Activated CD4-positive, alpha-beta memory T cell treated with anti-CD3 and anti-CD28 coated beads for 36 hours (primary cell): ENCODE measurements at regions of chr18 and their contacts with region 1.

Region 1: DNA sequence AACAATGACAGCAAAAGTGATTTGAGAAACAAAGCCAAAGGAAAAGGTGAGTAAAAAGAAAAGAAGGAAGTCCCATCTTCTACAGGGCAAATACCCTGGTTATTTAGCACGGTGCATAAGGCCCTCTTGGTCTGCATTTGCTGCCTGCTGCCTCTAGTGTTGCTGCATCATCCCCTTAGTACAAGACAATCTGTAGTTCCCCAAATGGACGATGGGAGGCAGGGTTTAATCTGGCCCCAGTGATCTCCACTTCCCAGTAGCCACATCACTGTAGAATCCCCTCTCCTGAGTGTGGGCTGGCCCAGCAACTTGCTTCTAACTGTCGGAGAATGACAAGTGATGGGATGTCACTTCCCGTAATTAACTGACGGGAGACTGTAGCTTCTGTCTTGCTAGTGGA is 85.1 kb downstream of the CTAGE1 start:
- DNase-seq: no peak
- H3K4me3 Mint-ChIP-seq: no peak overlapping the region
- H3K27ac Mint-ChIP-seq: no peak overlapping the region
- H3K4me1 Mint-ChIP-seq: peaks cover 5% of the 10 kb centered on the region
- H3K27me3 Mint-ChIP-seq: no peaks in the 10 kb centered on the region

Region 2: DNA sequence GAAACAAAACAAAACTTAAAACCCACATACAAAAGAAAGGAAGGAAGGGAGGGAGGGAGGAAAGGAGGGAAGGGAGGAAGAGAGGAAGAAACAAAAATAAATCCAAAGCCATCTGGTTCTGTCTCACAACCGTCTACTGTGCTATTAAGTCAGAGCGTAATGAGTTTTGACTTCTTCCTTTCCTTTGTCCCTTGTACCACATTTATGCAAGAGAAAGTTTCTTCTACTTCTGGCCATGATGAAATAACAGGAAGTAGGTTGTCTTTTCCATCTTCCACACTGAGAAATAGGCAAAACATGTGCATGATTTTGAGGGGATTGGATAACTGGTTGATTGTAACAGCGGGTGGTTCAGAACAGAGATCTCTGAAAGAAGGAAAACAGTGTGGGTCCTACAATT is 36.3 kb before region 1 on chr18:
- CTCF ChIA-PET with region 1: no interaction called
- POLR2A ChIA-PET with region 1: no interaction called
- intact Hi-C with region 1: loop called (anchors 5 kb)
- DNase-seq: no peak
- H3K4me3 Mint-ChIP-seq: no peak overlapping the region
- H3K27ac Mint-ChIP-seq: no peak overlapping the region
- H3K4me1 Mint-ChIP-seq: no peaks in the 10 kb centered on the region
- H3K27me3 Mint-ChIP-seq: peaks cover 1% of the 10 kb centered on the region